CD8-positive, alpha-beta T cell (primary cell): ENCODE measurements at regions of chr2 and their contacts with region 1.

Region 1: GRCh38 chr2:206085742-206086445 is at the start of gene INO80D:
- DNase-seq: peak; percentile 63 to 93 (median 76)
- ATAC-seq: peak; percentile 91
- H3K4me3 ChIP-seq: peak within 1 kb of the TSS; percentile 85 to 88
- H3K4me3 Mint-ChIP-seq: peak within 1 kb of the TSS; percentile 100
- H3K27ac ChIP-seq: peak within 1 kb of the TSS; percentile 92 to 98
- H3K27ac Mint-ChIP-seq: peak within 1 kb of the TSS; percentile 100
- H3K4me1 ChIP-seq: peaks cover 32% of the 10 kb centered on the region
- H3K4me1 Mint-ChIP-seq: peaks cover 50% of the 10 kb centered on the region
- H3K27me3 ChIP-seq: no peaks in the 10 kb centered on the region
- H3K27me3 Mint-ChIP-seq: no peaks in the 10 kb centered on the region
- CTCF ChIP-seq: peak; percentile 66
- total RNA-seq, gene INO80D: 48.5 to 48.6 TPM

Region 2: DNA sequence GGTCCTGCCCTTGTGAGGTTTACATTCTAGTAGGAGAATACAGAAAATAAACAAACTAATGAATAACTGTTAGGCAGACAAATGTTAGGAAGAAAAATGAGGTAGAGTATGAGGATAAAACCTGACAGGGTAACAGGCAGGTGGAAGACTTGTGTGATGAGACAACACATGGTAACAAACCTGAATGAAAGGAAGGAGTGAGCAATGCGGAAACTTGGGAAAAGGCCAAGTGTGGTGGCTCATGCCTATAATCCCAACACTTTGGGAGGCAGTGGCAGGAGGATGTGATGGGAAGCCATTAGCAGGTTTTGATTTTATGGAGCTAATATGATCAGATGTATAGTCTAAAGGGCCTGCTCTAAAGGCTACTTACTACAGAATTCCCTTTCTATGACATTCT is 74.1 kb before region 1 on chr2:
- CTCF ChIA-PET with region 1: no interaction called
- POLR2A ChIA-PET with region 1: no interaction called
- intact Hi-C with region 1: loop called in 1 of 2 experiments (anchors 10 kb)
- DNase-seq: no peak
- ATAC-seq: no peak
- H3K4me3 ChIP-seq: no peak overlapping the region
- H3K4me3 Mint-ChIP-seq: no peak overlapping the region
- H3K27ac ChIP-seq: no peak overlapping the region
- H3K27ac Mint-ChIP-seq: peak overlapping the region; percentile 5
- H3K4me1 ChIP-seq: no peaks in the 10 kb centered on the region
- H3K4me1 Mint-ChIP-seq: no peaks in the 10 kb centered on the region
- H3K27me3 ChIP-seq: no peaks in the 10 kb centered on the region
- H3K27me3 Mint-ChIP-seq: no peaks in the 10 kb centered on the region
- CTCF ChIP-seq: no peak

Region 3: GRCh38 chr2:206069417-206069816 is 16.5 kb before region 1 on chr2:
- CTCF ChIA-PET with region 1: no interaction called
- POLR2A ChIA-PET with region 1: interaction called, 9 read pairs
- intact Hi-C with region 1: loop called in 1 of 2 experiments (anchors 2 kb)
- DNase-seq: no peak
- ATAC-seq: no peak
- H3K4me3 ChIP-seq: no peak overlapping the region
- H3K4me3 Mint-ChIP-seq: no peak overlapping the region
- H3K27ac ChIP-seq: no peak overlapping the region
- H3K27ac Mint-ChIP-seq: no peak overlapping the region
- H3K4me1 ChIP-seq: no peaks in the 10 kb centered on the region
- H3K4me1 Mint-ChIP-seq: peaks cover 51% of the 10 kb centered on the region
- H3K27me3 ChIP-seq: no peaks in the 10 kb centered on the region
- H3K27me3 Mint-ChIP-seq: no peaks in the 10 kb centered on the region
- CTCF ChIP-seq: no peak

Region 4: GRCh38 chr2:206159346-206160124 is 73.6 kb after region 1 on chr2 and contains the starts of genes EEF1B2 and NDUFS1:
- CTCF ChIA-PET with region 1: interaction called, 5 read pairs
- POLR2A ChIA-PET with region 1: interaction called, 9 read pairs
- intact Hi-C with region 1: loop called (anchors 1 kb)
- DNase-seq: peak; percentile 95 to 99 (median 96)
- ATAC-seq: peak; percentile 85
- H3K4me3 ChIP-seq: peak within 1 kb of the TSS; percentile 73 to 93
- H3K4me3 Mint-ChIP-seq: peak within 1 kb of the TSS; percentile 99
- H3K27ac ChIP-seq: peak within 1 kb of the TSS; percentile 81 to 91
- H3K27ac Mint-ChIP-seq: peak within 1 kb of the TSS; percentile 100
- H3K4me1 ChIP-seq: peaks cover 30% of the 10 kb centered on the region
- H3K4me1 Mint-ChIP-seq: peaks cover 59% of the 10 kb centered on the region
- H3K27me3 ChIP-seq: no peaks in the 10 kb centered on the region
- H3K27me3 Mint-ChIP-seq: no peaks in the 10 kb centered on the region
- CTCF ChIP-seq: no peak
- total RNA-seq, gene EEF1B2: 1,147 to 1,208 TPM
- total RNA-seq, gene NDUFS1: 23.7 to 28.7 TPM

Region 5: DNA sequence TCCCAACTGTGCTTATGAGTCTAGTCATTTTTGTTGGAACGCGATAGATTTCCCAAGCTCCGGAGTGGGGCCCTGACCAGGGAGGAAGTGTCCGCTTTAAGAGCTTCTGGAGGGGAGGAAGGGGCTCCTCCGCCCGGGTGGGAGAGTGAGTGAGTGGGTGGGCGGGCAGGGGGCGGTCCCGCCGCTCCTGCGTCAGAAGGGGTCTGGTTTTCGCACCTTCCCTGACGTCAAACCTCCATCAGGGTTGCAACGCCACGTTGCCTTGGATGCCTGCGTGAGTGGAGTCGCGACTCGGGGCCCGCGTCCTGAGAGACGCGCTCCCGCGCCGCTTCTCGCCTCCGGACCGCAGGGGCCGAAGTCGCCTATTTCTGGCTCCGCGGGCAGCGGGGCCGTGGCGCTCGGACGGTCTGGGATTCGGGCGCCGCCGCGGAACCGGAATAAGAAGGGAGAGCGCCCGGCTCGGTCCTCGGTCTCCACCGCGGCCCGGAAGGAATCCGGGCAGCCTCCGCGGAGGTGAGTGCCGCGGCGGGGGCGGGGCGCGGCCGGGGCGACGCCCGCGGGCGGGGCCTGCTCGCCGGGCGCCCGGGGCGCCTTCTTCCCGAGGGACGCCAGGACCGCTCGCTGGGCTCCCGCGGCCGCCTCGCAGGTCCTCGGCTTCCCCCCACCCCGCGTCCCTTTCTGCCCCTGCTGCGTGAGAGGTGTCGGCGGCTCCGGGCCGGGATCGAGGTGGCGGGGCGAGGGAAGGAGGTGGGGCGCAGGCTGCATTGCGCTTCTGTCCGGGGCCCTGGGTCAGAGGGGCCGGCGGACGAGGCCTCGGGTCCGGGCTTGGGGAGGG is 188.8 kb after region 1 on chr2 and contains the start of gene ZDBF2:
- CTCF ChIA-PET with region 1: no interaction called
- POLR2A ChIA-PET with region 1: no interaction called
- intact Hi-C with region 1: loop called (anchors 10 kb)
- DNase-seq: peak in 8 of 9 experiments; percentile 6 to 77 (median 56)
- ATAC-seq: peak; percentile 73
- H3K4me3 ChIP-seq: peak within 1 kb of the TSS; percentile 48 to 52
- H3K4me3 Mint-ChIP-seq: peak within 1 kb of the TSS; percentile 89
- H3K27ac ChIP-seq: peak within 1 kb of the TSS; percentile 46 to 59
- H3K27ac Mint-ChIP-seq: peak within 1 kb of the TSS; percentile 90
- H3K4me1 ChIP-seq: peaks cover 13% of the 10 kb centered on the region
- H3K4me1 Mint-ChIP-seq: peaks cover 18% of the 10 kb centered on the region
- H3K27me3 ChIP-seq: peaks cover 6 to 16% of the 10 kb centered on the region in 2 experiments
- H3K27me3 Mint-ChIP-seq: peaks cover 42% of the 10 kb centered on the region
- CTCF ChIP-seq: no peak
- total RNA-seq, gene ZDBF2: 39.2 to 42.3 TPM

Region 6: DNA sequence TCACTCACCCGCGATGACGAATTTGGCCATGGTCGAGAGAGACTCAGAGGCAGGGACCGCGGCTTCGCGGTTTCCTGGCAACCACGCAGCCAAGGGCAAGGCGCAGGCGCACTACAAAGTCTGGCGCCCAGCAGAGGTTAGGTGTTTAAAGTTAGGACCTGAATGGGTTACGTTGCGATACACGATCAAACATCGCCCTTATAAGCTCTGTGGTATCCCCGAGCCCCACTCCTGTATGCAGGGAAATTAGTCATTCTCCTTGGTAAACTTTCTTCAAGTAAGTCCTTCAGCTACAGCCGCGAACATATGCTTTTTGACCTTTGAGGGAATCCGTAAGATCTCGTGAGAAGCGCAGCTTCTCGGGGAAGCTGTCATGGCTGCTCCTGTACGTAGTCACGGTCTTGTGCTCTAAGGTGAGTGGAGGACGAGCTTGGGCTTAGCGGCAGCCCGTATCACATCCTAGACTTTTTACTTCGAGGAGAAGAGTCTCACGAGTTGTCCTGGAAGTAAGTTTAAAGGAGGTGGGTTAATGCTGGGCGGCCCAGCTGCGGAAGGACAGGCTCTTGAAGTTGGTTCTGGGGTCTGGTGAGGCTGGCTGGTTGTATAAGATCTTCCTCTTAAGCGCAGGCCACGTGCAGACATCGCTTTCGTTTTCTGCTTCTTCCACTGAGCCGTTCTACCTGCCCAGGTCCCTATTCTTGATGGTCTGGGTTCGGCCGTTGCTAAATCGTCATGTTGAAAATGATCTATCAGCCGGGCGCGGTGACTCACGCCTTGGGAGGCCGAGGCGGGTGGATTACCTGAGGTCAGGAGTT is 679.6 kb after region 1 on chr2 and contains the starts of genes FASTKD2 and MDH1B:
- CTCF ChIA-PET with region 1: no interaction called
- POLR2A ChIA-PET with region 1: no interaction called
- intact Hi-C with region 1: loop called in 1 of 2 experiments (anchors 2 kb)
- DNase-seq: peak; percentile 64 to 94 (median 81)
- ATAC-seq: peak; percentile 87
- H3K4me3 ChIP-seq: peak within 1 kb of the TSS; percentile 62 to 94
- H3K4me3 Mint-ChIP-seq: peak within 1 kb of the TSS; percentile 94
- H3K27ac ChIP-seq: peak within 1 kb of the TSS; percentile 93 to 97
- H3K27ac Mint-ChIP-seq: peak within 1 kb of the TSS; percentile 98
- H3K4me1 ChIP-seq: peaks cover 40% of the 10 kb centered on the region
- H3K4me1 Mint-ChIP-seq: peaks cover 41% of the 10 kb centered on the region
- H3K27me3 ChIP-seq: no peaks in the 10 kb centered on the region
- H3K27me3 Mint-ChIP-seq: no peaks in the 10 kb centered on the region
- CTCF ChIP-seq: no peak
- total RNA-seq, gene FASTKD2: 31.3 to 33.8 TPM
- total RNA-seq, gene MDH1B: 0.19 to 0.33 TPM